CD8-positive, alpha-beta memory T cell (primary cell): ENCODE measurements at regions of chr1 and their contacts with region 1.

Region 1: DNA sequence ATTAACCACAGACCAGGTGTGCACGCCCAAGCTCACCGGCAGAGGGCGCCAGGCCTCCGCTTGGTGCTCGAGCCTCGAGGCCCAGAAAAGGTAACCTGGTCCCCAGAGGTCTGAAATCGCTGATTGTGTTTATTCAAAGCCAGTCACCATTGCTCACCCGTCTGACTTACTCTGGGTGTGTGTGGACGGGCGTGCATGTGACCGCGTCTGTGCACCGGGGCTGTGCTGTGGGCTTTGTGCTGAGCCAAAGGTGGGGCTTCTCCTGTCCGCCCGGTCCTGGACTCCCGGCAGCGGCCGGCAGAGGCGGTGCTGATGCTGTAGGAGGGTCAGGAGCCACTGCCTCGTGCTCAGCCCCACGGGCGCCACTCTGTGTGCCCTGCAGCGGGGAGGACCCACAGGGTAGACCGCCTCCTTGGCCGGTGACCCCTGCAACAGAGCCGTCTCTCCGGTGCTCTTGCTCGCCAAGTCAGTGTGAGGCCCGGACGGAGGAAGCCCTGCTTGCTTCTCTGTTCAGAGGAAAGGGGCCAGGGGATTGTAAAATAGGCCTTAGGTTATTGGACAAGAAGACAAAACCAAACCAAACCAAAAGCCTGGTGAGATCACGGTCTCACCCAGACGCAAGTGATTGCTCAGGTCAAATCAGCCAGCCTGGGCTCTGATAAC is 32.0 kb upstream of the BTG2 start:
- DNase-seq: peak; percentile 86 to 93 (median 88)
- H3K4me3 ChIP-seq: peak overlapping the region; percentile 17
- H3K4me3 Mint-ChIP-seq: peak overlapping the region in 6 of 7 donors; percentile 40 to 74 (median 54)
- H3K27ac ChIP-seq: no peak overlapping the region
- H3K27ac Mint-ChIP-seq: peak overlapping the region in 7 of 8 donors; percentile 38 to 91 (median 80)
- H3K4me1 ChIP-seq: peaks cover 69% of the 10 kb centered on the region
- H3K4me1 Mint-ChIP-seq: peaks cover 32 to 54% (median 40%) of the 10 kb centered on the region in 3 donors
- H3K27me3 ChIP-seq: no peaks in the 10 kb centered on the region
- H3K27me3 Mint-ChIP-seq: no peaks in the 10 kb centered on the region

Region 2: DNA sequence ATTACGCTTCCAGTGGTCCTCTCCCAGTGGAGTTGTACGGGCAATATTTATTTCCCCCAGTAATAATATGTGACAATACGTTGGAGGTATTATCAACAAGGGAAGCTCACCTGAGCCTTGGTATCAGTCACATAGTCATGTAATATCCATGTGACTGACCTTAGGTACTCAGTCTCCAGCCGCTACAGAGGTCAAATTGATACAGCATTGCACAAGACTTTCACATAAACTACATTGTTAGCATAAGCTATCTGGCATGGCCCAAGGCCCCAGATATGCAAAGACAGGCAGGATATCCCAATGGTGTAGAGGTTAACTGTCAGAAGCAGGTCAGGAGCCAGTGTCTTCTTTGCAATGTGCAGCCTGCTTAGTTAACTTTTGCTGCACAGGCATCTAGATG is 28.6 kb before region 1 on chr1:
- CTCF ChIA-PET with region 1: no interaction called
- POLR2A ChIA-PET with region 1: no interaction called
- DNase-seq: no peak
- H3K4me3 ChIP-seq: no peak overlapping the region
- H3K4me3 Mint-ChIP-seq: no peak overlapping the region
- H3K27ac ChIP-seq: no peak overlapping the region
- H3K27ac Mint-ChIP-seq: no peak overlapping the region
- H3K4me1 ChIP-seq: no peaks in the 10 kb centered on the region
- H3K4me1 Mint-ChIP-seq: no peaks in the 10 kb centered on the region
- H3K27me3 ChIP-seq: no peaks in the 10 kb centered on the region
- H3K27me3 Mint-ChIP-seq: peaks cover 27 to 61% of the 10 kb centered on the region in 2 donors

Region 3: DNA sequence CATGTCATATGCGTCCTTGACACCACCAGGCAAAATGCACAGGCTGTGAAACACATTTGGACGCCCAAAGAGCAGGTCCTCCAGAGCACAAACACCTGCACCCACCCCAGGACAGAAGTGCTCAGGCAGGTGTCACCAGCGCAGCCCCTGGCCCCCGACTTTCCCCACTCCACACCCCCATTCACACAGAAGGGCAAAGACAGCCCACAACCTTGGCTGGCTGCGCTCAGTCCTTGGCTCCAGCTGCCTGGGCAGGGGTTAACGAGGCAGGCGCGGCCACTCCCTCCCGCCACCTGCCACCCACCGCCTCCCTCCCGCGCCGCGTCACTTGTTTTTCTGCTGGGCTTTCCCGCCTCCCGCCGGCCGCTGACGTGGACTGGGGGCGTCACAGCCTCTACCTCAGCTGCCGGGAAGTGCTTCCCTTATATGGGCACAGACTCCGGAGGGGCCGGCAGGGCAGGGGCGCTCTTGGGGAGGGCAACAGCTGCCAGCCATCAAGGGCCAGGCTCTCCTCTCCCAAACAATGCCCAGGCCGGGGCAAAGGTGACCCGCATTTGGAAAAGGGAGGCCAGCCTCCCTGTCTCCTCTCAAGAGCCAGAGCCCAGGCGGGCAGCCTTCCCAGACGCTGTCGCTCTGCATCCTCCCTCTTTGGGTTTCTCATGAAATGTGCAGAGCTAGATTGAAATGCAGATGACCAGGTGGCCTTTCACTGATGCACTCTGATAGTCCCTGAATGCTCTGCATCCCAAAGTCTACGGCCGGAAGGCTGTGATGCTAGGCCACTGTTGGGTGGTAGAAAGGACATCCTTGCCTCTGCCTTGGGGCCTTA is 17.1 kb after region 1 on chr1:
- CTCF ChIA-PET with region 1: interaction called, 242 read pairs
- POLR2A ChIA-PET with region 1: interaction called, 11 read pairs
- DNase-seq: peak; percentile 95 to 98 (median 97)
- H3K4me3 ChIP-seq: peak overlapping the region; percentile 76
- H3K4me3 Mint-ChIP-seq: peak overlapping the region; percentile 63 to 87 (median 85)
- H3K27ac ChIP-seq: peak overlapping the region; percentile 99
- H3K27ac Mint-ChIP-seq: peak overlapping the region; percentile 99 to 100 (median 100)
- H3K4me1 ChIP-seq: peaks cover 62% of the 10 kb centered on the region
- H3K4me1 Mint-ChIP-seq: peaks cover 64 to 73% (median 64%) of the 10 kb centered on the region in 3 donors
- H3K27me3 ChIP-seq: no peaks in the 10 kb centered on the region
- H3K27me3 Mint-ChIP-seq: peaks cover 0 to 13% of the 10 kb centered on the region in 2 donors

Region 4: GRCh38 chr1:203320591-203321272 is 47.4 kb after region 1 on chr1:
- CTCF ChIA-PET with region 1: interaction called, 126 read pairs
- POLR2A ChIA-PET with region 1: interaction called, 14 read pairs
- DNase-seq: peak; percentile 59 to 89 (median 85)
- H3K4me3 ChIP-seq: peak overlapping the region; percentile 34
- H3K4me3 Mint-ChIP-seq: peak overlapping the region; percentile 33 to 90 (median 80)
- H3K27ac ChIP-seq: peak overlapping the region; percentile 48
- H3K27ac Mint-ChIP-seq: peak overlapping the region; percentile 93 to 99 (median 98)
- H3K4me1 ChIP-seq: peaks cover 75% of the 10 kb centered on the region
- H3K4me1 Mint-ChIP-seq: peaks cover 79 to 92% (median 90%) of the 10 kb centered on the region in 3 donors
- H3K27me3 ChIP-seq: no peaks in the 10 kb centered on the region
- H3K27me3 Mint-ChIP-seq: peaks cover 0 to 3% of the 10 kb centered on the region in 2 donors

Region 5: GRCh38 chr1:203326830-203327683 is 53.7 kb after region 1 on chr1:
- CTCF ChIA-PET with region 1: interaction called, 775 read pairs
- POLR2A ChIA-PET with region 1: interaction called, 14 read pairs
- DNase-seq: peak; percentile 91 to 97 (median 95)
- H3K4me3 ChIP-seq: peak overlapping the region; percentile 78
- H3K4me3 Mint-ChIP-seq: peak overlapping the region; percentile 77 to 90 (median 80)
- H3K27ac ChIP-seq: peak overlapping the region; percentile 90
- H3K27ac Mint-ChIP-seq: peak overlapping the region; percentile 93 to 99 (median 98)
- H3K4me1 ChIP-seq: peaks cover 63% of the 10 kb centered on the region
- H3K4me1 Mint-ChIP-seq: peaks cover 65 to 68% (median 66%) of the 10 kb centered on the region in 3 donors
- H3K27me3 ChIP-seq: no peaks in the 10 kb centered on the region
- H3K27me3 Mint-ChIP-seq: peaks cover 0 to 3% of the 10 kb centered on the region in 2 donors